Activated naive CD4-positive, alpha-beta T cell treated with anti-CD3 and anti-CD28 coated beads for 36 hours (primary cell): ENCODE measurements at regions of chr7 and their contacts with region 1.

Region 1: DNA sequence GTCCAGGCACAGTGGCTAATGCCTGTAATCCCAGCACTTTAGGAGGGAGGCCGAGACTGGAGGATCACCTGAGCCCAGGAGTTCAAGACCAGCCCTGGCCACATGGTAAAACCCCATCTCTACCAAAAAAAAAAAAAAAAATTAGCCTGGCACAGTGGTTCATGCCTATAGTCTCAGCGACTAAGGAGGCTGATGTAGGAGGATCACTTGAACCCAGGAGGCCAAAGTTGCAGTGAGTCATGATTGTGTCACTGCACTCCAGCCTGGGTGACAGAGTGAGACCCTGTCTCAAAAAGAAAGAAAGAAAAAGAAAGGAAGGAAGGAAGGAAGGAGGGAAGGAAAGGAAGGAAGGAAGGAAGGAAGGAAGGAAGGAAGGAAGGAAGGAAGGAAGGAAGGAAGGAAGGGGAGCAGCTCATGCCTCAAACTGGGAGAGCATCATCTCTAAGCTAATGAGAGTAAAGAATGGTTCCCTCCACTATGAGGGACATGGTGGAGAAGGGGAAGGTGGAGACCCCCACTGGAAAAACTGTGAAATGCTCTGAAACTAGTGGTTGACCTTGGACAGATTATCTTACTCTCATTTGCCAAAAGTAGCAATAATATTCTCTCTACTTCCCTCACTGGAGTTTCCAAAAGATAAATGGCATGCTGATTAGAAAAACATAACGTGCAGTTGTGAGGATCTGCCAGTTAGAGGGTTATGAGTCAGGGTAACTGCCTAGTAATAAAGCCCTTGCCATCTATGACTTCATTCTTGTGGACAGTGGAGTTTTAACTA is 16.8 kb downstream of the GIMAP5 start:
- DNase-seq: peak; percentile 64
- H3K4me3 Mint-ChIP-seq: no peak overlapping the region
- H3K27ac Mint-ChIP-seq: peak overlapping the region; percentile 98
- H3K4me1 Mint-ChIP-seq: peaks cover 71% of the 10 kb centered on the region
- H3K27me3 Mint-ChIP-seq: no peaks in the 10 kb centered on the region

Region 2: DNA sequence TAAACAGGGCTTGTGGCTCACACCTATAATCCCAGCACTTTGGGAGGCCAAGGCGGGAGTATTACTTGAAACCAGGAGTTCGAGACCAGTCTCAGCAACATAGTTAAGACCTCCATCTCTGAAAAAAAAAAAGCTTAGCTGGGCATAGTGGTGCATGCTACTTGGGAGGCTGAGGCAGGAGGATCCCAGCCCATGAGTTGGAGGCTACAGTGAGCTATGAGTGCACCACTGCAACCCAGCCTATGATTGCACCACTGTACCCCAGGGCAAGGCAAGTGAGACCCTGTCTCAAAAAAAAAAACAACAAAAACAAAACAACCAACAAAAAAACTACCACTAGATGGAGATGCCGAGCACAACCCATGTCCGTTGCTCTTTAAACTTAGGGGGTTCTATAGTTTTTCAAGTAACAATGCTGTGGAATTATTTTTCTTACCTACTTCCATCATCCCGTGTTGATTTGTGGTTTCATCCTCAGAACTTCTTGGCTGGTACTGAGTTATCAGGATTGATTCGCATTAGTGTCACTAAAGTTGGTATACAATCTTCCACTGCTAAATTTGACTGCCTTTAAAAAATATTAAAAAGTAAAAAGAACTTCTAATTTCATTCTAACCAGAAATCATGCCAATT is 397.6 kb before region 1 on chr7:
- CTCF ChIA-PET with region 1: interaction called, 3 read pairs
- intact Hi-C with region 1: loop called (anchors 1 kb)
- DNase-seq: peak; percentile 28
- H3K4me3 Mint-ChIP-seq: no peak overlapping the region
- H3K27ac Mint-ChIP-seq: no peak overlapping the region
- H3K4me1 Mint-ChIP-seq: peaks cover 40% of the 10 kb centered on the region
- H3K27me3 Mint-ChIP-seq: no peaks in the 10 kb centered on the region

Region 3: GRCh38 chr7:150404805-150405583 is 349.0 kb before region 1 on chr7:
- CTCF ChIA-PET with region 1: interaction called, 3 read pairs
- intact Hi-C with region 1: loop called (anchors 1 kb)
- DNase-seq: peak; percentile 76
- H3K4me3 Mint-ChIP-seq: peak overlapping the region; percentile 85
- H3K27ac Mint-ChIP-seq: peak overlapping the region; percentile 83
- H3K4me1 Mint-ChIP-seq: peaks cover 29% of the 10 kb centered on the region
- H3K27me3 Mint-ChIP-seq: no peaks in the 10 kb centered on the region

Region 4: DNA sequence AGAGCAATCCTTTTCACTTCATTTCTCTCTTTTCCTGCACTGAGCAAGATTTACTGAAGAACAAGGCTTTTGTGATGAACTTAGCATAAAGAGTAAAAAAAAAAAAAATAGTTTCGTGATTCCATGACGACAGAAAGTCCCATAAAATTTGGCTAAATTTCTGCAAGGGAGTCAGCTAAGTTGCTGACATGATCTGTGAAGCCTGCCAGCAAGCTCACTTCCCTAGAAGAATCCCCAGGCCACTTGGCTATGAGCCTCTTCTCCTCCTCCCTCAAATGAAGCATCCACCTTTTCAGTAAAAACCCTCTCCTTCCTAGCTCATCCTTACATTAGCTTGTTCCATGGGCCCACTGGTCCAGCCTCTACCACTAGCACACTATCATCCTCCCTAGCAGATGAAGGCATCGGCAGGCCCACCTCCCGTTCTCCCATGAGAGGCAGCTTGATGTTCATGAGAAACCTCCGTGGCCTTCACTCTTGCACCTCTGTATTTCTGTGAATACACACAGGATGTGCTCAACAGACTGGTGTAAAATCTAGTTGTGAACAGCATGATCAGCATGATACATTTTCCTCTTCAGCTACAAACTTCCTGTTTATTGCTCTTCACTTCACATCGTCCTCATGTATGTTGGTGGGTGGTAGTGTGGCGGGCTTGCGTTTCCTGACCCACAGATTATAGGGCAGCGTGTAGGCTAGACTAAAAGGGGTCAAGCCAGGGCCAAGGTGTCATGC is 272.7 kb before region 1 on chr7:
- CTCF ChIA-PET with region 1: interaction called, 3 read pairs
- intact Hi-C with region 1: loop called (anchors 1 kb)
- DNase-seq: peak; percentile 67
- H3K4me3 Mint-ChIP-seq: peak overlapping the region; percentile 69
- H3K27ac Mint-ChIP-seq: peak overlapping the region; percentile 97
- H3K4me1 Mint-ChIP-seq: peaks cover 93% of the 10 kb centered on the region
- H3K27me3 Mint-ChIP-seq: no peaks in the 10 kb centered on the region

Region 5: GRCh38 chr7:150620617-150621371 is 133.2 kb before region 1 on chr7:
- CTCF ChIA-PET with region 1: no interaction called
- intact Hi-C with region 1: loop called (anchors 1 kb)
- DNase-seq: peak; percentile 10
- H3K4me3 Mint-ChIP-seq: peak overlapping the region; percentile 8
- H3K27ac Mint-ChIP-seq: peak overlapping the region; percentile 82
- H3K4me1 Mint-ChIP-seq: peaks cover 53% of the 10 kb centered on the region
- H3K27me3 Mint-ChIP-seq: no peaks in the 10 kb centered on the region

Region 6: GRCh38 chr7:150685219-150686029 is 68.6 kb before region 1 on chr7 and contains the start of gene GIMAP2:
- CTCF ChIA-PET with region 1: interaction called, 4 read pairs
- intact Hi-C with region 1: loop called (anchors 2 kb)
- DNase-seq: peak; percentile 56
- H3K4me3 Mint-ChIP-seq: peak within 1 kb of the TSS; percentile 93
- H3K27ac Mint-ChIP-seq: peak within 1 kb of the TSS; percentile 98
- H3K4me1 Mint-ChIP-seq: peaks cover 73% of the 10 kb centered on the region
- H3K27me3 Mint-ChIP-seq: no peaks in the 10 kb centered on the region
- total RNA-seq, gene GIMAP2: 45.0 to 49.5 TPM

Region 7: GRCh38 chr7:150830937-150831336 is 76.9 kb after region 1 on chr7:
- CTCF ChIA-PET with region 1: no interaction called
- intact Hi-C with region 1: no loop called
- DNase-seq: no peak
- H3K4me3 Mint-ChIP-seq: no peak overlapping the region
- H3K27ac Mint-ChIP-seq: no peak overlapping the region
- H3K4me1 Mint-ChIP-seq: no peaks in the 10 kb centered on the region
- H3K27me3 Mint-ChIP-seq: peaks cover 18% of the 10 kb centered on the region

Region 8: DNA sequence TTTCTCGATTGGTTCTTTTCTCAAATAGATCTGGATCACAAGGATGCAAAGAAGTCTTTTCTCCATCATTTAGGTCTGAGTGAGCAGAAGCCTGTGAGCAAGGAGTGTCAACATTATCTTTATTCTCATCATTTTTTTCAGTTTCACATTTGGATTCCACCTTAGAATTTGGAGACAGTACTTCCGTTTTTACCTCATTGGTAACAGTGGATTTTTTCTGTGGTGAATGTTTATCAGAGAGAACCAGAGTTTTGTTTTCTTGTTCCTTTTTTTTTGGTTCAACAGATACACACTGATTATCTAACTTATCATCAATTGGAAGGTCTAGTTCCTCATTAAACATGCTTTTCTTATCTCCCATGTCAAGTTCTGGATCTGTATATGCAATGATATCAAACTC is 1422.8 kb after region 1 on chr7:
- CTCF ChIA-PET with region 1: no interaction called
- intact Hi-C with region 1: no loop called
- DNase-seq: no peak
- H3K4me3 Mint-ChIP-seq: no peak overlapping the region
- H3K27ac Mint-ChIP-seq: no peak overlapping the region
- H3K4me1 Mint-ChIP-seq: peaks cover 5% of the 10 kb centered on the region
- H3K27me3 Mint-ChIP-seq: no peaks in the 10 kb centered on the region